T-cell (primary cell): ENCODE measurements at regions of chr4 and their contacts with region 1.

Region 1: DNA sequence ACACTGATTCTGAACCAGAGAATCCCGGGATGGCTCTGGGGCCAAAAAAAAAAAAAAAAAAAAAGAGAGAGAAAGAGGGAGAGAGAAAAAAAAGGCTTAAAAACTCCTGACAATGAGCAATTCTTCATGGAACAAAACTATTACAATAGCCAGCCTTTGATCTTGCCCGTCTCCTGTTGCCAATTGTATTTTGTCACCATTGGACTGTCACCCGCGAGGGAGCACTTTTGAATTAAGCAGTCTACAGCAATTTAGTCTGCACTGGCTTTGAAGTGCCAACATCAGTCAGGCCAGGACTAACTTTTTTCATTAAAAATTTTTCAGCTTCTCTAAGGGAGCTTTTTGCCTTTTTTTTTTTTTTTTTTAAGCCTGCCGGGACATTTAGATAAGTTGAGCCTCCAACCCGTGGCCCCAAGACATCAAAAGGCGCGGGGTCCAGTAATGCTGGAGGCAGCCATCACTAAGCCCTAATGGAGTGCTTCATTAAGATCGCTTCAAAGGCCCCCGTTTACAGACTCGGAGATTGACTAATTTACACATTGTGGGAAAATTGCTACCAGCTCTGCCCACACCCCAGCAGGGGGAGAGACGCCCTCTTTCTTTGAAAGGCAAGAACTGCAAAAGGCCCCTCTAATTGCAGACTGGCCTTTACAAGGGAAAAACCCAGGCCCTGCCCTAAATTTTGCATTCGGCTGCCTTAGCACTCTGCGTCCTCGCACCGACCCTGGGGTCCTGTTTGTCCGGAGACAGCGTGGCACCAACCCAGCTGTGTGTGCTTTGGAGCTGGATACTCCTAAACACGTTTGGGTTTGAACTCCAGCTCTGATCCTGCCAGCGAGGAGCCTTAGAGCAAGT is 98.1 kb upstream of the MSX1 start:
- DNase-seq: no peak
- ATAC-seq: no peak
- H3K4me3 ChIP-seq: no peak overlapping the region
- H3K4me3 Mint-ChIP-seq: no peak overlapping the region
- H3K27ac ChIP-seq: no peak overlapping the region
- H3K27ac Mint-ChIP-seq: no peak overlapping the region
- H3K4me1 ChIP-seq: peaks cover 0 to 14% of the 10 kb centered on the region in 2 experiments
- H3K4me1 Mint-ChIP-seq: peaks cover 9 to 19% (median 11%) of the 10 kb centered on the region in 3 donors
- H3K27me3 ChIP-seq: peaks cover 0 to 19% of the 10 kb centered on the region in 2 experiments
- H3K27me3 Mint-ChIP-seq: peaks cover 7 to 8% of the 10 kb centered on the region in 2 donors

Region 2: GRCh38 chr4:4746444-4746843 is 14.9 kb before region 1 on chr4:
- CTCF ChIA-PET with region 1: no interaction called
- POLR2A ChIA-PET with region 1: interaction called in 1 of 2 experiments, 13 read pairs
- DNase-seq: no peak
- ATAC-seq: no peak
- H3K4me3 ChIP-seq: no peak overlapping the region
- H3K4me3 Mint-ChIP-seq: no peak overlapping the region
- H3K27ac ChIP-seq: no peak overlapping the region
- H3K27ac Mint-ChIP-seq: no peak overlapping the region
- H3K4me1 ChIP-seq: no peaks in the 10 kb centered on the region
- H3K4me1 Mint-ChIP-seq: no peaks in the 10 kb centered on the region
- H3K27me3 ChIP-seq: peaks cover 0 to 3% of the 10 kb centered on the region in 2 experiments
- H3K27me3 Mint-ChIP-seq: peaks cover 0 to 1% of the 10 kb centered on the region in 2 donors